CD4-positive, alpha-beta T cell (primary cell): ENCODE measurements at regions of chr3 and their contacts with region 1.

Region 1: GRCh38 chr3:52056968-52057805 is 816 bp upstream of the DUSP7 start:
- DNase-seq: peak; percentile 99 to 100 (median 99)
- ATAC-seq: peak; percentile 83
- H3K4me3 ChIP-seq: peak overlapping the region; percentile 68
- H3K4me3 Mint-ChIP-seq: peak overlapping the region; percentile 94
- H3K27ac ChIP-seq: peak overlapping the region; percentile 76 to 88
- H3K27ac Mint-ChIP-seq: peak overlapping the region; percentile 98
- H3K4me1 ChIP-seq: peaks cover 45% of the 10 kb centered on the region
- H3K4me1 Mint-ChIP-seq: peaks cover 38% of the 10 kb centered on the region
- H3K27me3 ChIP-seq: no peaks in the 10 kb centered on the region
- H3K27me3 Mint-ChIP-seq: no peaks in the 10 kb centered on the region
- CTCF ChIP-seq: no peak

Region 2: DNA sequence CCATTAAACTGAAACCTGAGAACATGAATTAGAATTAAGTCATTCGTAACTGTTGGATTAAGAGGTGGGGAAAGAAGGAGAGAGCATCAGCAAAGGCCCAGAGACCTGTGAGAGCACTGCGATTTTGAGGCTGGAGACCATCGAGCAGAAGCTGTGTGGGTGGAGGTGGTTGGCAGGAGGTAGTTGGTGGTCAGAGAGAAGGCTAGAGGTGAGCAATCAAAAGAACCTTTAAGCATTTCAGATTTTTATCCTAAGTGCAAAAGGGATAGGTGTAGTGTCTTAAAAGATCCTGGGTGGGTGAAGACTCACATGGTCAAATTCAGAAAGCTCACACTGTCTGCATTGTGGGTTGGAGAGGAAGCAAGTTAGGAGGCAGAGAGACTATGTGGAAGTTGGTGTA is 451.2 kb before region 1 on chr3:
- CTCF ChIA-PET with region 1: no interaction called
- POLR2A ChIA-PET with region 1: no interaction called
- intact Hi-C with region 1: no loop called
- DNase-seq: no peak
- ATAC-seq: no peak
- H3K4me3 ChIP-seq: no peak overlapping the region
- H3K4me3 Mint-ChIP-seq: no peak overlapping the region
- H3K27ac ChIP-seq: no peak overlapping the region
- H3K27ac Mint-ChIP-seq: no peak overlapping the region
- H3K4me1 ChIP-seq: peaks cover 4% of the 10 kb centered on the region
- H3K4me1 Mint-ChIP-seq: peaks cover 30% of the 10 kb centered on the region
- H3K27me3 ChIP-seq: no peaks in the 10 kb centered on the region
- H3K27me3 Mint-ChIP-seq: no peaks in the 10 kb centered on the region
- CTCF ChIP-seq: no peak

Region 3: GRCh38 chr3:51670823-51671733 is 386.1 kb before region 1 on chr3 and contains the start of gene TEX264:
- CTCF ChIA-PET with region 1: no interaction called
- POLR2A ChIA-PET with region 1: no interaction called
- intact Hi-C with region 1: loop called in 1 of 2 experiments (anchors 5 kb)
- DNase-seq: peak; percentile 88 to 100 (median 95)
- ATAC-seq: peak; percentile 75
- H3K4me3 ChIP-seq: peak within 1 kb of the TSS; percentile 98
- H3K4me3 Mint-ChIP-seq: peak within 1 kb of the TSS; percentile 94
- H3K27ac ChIP-seq: peak within 1 kb of the TSS; percentile 83 to 91
- H3K27ac Mint-ChIP-seq: peak within 1 kb of the TSS; percentile 97
- H3K4me1 ChIP-seq: peaks cover 67% of the 10 kb centered on the region
- H3K4me1 Mint-ChIP-seq: peaks cover 80% of the 10 kb centered on the region
- H3K27me3 ChIP-seq: no peaks in the 10 kb centered on the region
- H3K27me3 Mint-ChIP-seq: no peaks in the 10 kb centered on the region
- CTCF ChIP-seq: no peak
- total RNA-seq, gene TEX264: 24.9 to 25.9 TPM

Region 4: DNA sequence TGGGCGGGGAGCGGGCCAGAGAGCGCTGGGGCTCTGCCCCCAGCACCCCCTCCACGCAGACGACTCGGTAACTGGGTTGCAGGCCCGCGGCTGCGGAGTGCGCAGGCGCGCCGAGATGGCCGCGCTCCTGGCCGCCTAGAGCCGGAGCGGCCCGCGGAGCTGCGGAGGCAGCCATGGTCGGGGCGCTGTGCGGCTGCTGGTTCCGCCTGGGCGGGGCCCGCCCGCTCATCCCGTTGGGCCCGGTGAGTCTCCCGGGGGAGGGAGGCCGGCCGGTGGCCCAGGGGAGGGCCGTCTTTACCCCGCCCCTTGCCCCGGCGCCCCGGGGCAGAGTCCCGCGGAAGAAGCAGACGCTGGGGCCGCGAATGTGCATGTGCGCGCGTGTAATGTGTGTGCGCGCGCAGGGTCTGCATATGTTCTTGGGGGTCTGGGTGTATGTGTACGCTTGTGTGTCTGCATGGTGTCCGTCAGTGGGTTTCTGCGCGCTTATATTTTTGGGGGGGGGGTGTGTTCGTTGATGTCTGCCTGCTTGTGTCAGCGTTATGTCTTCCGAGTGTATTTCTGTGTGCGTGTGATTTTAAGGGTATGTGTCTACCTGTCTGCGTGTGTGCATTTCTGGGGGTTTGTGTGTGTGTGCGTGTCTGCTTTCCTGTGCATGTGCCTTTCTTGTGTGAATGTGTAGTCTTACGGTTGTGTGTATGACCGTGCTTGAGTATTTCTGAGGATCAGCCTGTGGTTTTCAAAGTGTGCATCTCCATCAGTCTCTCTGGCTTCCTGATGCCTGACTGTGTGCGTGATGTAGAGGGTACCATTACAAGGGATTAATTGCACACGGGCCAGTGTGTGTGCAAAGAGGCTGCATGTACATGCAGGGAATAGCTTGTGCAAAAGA is 82.0 kb before region 1 on chr3 and contains the start of gene ABHD14A:
- CTCF ChIA-PET with region 1: interaction called, 16 read pairs
- POLR2A ChIA-PET with region 1: interaction called, 11 read pairs
- intact Hi-C with region 1: no loop called
- DNase-seq: peak; percentile 48 to 92 (median 67)
- ATAC-seq: peak; percentile 67
- H3K4me3 ChIP-seq: peak within 1 kb of the TSS; percentile 63
- H3K4me3 Mint-ChIP-seq: peak within 1 kb of the TSS; percentile 97
- H3K27ac ChIP-seq: peak within 1 kb of the TSS; percentile 57 to 79
- H3K27ac Mint-ChIP-seq: peak within 1 kb of the TSS; percentile 92
- H3K4me1 ChIP-seq: peaks cover 61% of the 10 kb centered on the region
- H3K4me1 Mint-ChIP-seq: peaks cover 44% of the 10 kb centered on the region
- H3K27me3 ChIP-seq: no peaks in the 10 kb centered on the region
- H3K27me3 Mint-ChIP-seq: no peaks in the 10 kb centered on the region
- CTCF ChIP-seq: no peak
- total RNA-seq, gene ABHD14A: 9.5 to 10.6 TPM

Region 5: GRCh38 chr3:51995346-51996163 is 61.6 kb before region 1 on chr3 and contains the start of gene RPL29:
- CTCF ChIA-PET with region 1: interaction called, 4 read pairs
- POLR2A ChIA-PET with region 1: interaction called, 35 read pairs
- intact Hi-C with region 1: loop called in 1 of 2 experiments (anchors 2 kb)
- DNase-seq: peak; percentile 87 to 97 (median 91)
- ATAC-seq: peak; percentile 98
- H3K4me3 ChIP-seq: peak within 1 kb of the TSS; percentile 88
- H3K4me3 Mint-ChIP-seq: peak within 1 kb of the TSS; percentile 99
- H3K27ac ChIP-seq: peak within 1 kb of the TSS; percentile 88 to 95
- H3K27ac Mint-ChIP-seq: peak within 1 kb of the TSS; percentile 97
- H3K4me1 ChIP-seq: peaks cover 40% of the 10 kb centered on the region
- H3K4me1 Mint-ChIP-seq: peaks cover 31% of the 10 kb centered on the region
- H3K27me3 ChIP-seq: no peaks in the 10 kb centered on the region
- H3K27me3 Mint-ChIP-seq: no peaks in the 10 kb centered on the region
- CTCF ChIP-seq: no peak
- total RNA-seq, gene RPL29: 1,843 to 1,901 TPM

Region 6: GRCh38 chr3:52090131-52090932 is 33.1 kb after region 1 on chr3:
- CTCF ChIA-PET with region 1: no interaction called
- POLR2A ChIA-PET with region 1: no interaction called
- intact Hi-C with region 1: no loop called
- DNase-seq: no peak
- ATAC-seq: no peak
- H3K4me3 ChIP-seq: no peak overlapping the region
- H3K4me3 Mint-ChIP-seq: no peak overlapping the region
- H3K27ac ChIP-seq: no peak overlapping the region
- H3K27ac Mint-ChIP-seq: no peak overlapping the region
- H3K4me1 ChIP-seq: peaks cover 19% of the 10 kb centered on the region
- H3K4me1 Mint-ChIP-seq: peaks cover 11% of the 10 kb centered on the region
- H3K27me3 ChIP-seq: no peaks in the 10 kb centered on the region
- H3K27me3 Mint-ChIP-seq: no peaks in the 10 kb centered on the region
- CTCF ChIP-seq: no peak

Region 7: DNA sequence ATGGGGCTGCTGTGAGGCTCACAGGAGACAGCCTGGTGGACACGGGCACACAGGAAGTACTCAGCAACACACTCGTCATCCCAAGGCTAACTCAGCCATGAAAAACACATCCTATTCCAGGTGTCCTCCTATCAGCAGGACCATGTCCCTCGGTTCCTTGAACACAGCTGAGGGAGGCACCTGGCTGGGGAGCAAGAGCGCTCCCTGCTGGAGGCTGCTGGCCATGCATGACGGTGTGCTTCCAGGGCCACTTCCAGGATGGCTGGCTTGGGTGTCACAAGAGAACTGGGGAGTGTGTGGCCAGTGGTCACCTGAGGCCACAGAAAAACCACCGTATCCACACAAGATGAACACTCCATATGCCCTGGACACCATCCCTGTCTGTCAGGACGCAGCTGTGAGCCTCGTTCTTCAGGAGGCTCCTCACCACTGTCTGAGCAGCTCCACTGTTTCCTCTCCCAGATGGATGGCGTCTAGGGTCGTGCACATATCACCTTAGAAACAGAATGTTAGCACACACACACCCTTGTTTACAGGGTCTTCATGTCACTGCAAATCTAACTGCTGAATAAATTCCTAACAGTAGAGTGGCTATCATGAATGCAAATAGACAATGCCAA is 66.0 kb after region 1 on chr3:
- CTCF ChIA-PET with region 1: interaction called, 10 read pairs
- POLR2A ChIA-PET with region 1: interaction called, 3 read pairs
- intact Hi-C with region 1: loop called (anchors 2 to 5 kb)
- DNase-seq: peak; percentile 62 to 88 (median 74)
- ATAC-seq: peak; percentile 98
- H3K4me3 ChIP-seq: no peak overlapping the region
- H3K4me3 Mint-ChIP-seq: no peak overlapping the region
- H3K27ac ChIP-seq: no peak overlapping the region
- H3K27ac Mint-ChIP-seq: no peak overlapping the region
- H3K4me1 ChIP-seq: peaks cover 8% of the 10 kb centered on the region
- H3K4me1 Mint-ChIP-seq: no peaks in the 10 kb centered on the region
- H3K27me3 ChIP-seq: no peaks in the 10 kb centered on the region
- H3K27me3 Mint-ChIP-seq: no peaks in the 10 kb centered on the region
- CTCF ChIP-seq: peak; percentile 93

Region 8: DNA sequence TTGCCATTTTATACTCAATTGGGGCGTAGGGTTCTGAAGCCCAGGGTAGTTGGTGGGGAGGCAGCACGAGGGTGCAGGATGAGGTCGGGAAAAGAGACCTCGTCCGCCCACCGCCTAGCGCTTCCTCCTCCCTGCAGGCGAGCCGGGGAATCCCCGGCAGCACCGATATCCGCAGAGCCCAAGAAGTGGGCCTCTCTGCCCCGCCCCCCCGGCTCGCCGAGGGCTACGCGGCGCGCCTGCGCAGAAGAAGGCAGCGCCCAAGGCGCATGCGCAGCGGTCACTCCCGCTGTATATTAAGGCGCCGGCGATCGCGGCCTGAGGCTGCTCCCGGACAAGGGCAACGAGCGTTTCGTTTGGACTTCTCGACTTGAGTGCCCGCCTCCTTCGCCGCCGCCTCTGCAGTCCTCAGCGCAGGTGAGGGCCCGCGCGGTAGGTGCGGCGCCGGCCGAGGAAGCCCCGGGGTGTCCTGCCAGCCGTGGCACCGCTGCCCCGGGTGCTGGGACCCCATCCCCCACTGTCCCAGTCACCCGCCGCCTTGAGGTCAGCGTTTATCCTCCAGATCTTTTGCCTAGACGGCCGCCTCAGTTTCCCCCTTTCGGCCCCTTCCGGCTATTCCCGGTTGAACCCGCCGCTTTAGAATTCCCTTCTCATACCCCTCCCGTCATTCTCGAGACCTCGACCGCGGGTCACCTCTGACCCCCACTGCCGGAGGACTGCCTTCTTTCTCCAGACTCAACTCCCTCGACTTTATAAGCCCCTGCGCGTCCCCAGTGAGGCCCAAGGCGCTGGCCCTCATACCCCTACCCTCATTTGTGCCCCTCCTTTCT is 140.9 kb after region 1 on chr3 and contains the start of gene ALAS1:
- CTCF ChIA-PET with region 1: no interaction called
- POLR2A ChIA-PET with region 1: interaction called, 6 read pairs
- intact Hi-C with region 1: loop called in 1 of 2 experiments (anchors 5 kb)
- DNase-seq: peak; percentile 87 to 97 (median 94)
- ATAC-seq: peak; percentile 98
- H3K4me3 ChIP-seq: peak within 1 kb of the TSS; percentile 90
- H3K4me3 Mint-ChIP-seq: peak within 1 kb of the TSS; percentile 98
- H3K27ac ChIP-seq: peak within 1 kb of the TSS; percentile 70 to 73
- H3K27ac Mint-ChIP-seq: peak within 1 kb of the TSS; percentile 92
- H3K4me1 ChIP-seq: peaks cover 50% of the 10 kb centered on the region
- H3K4me1 Mint-ChIP-seq: peaks cover 51% of the 10 kb centered on the region
- H3K27me3 ChIP-seq: no peaks in the 10 kb centered on the region
- H3K27me3 Mint-ChIP-seq: no peaks in the 10 kb centered on the region
- CTCF ChIP-seq: no peak
- total RNA-seq, gene ALAS1: 6.0 to 7.0 TPM